Uterus (tissue), 4 donors: ENCODE measurements at regions of chr19 and their contacts with region 1.

Region 1: GRCh38 chr19:44954824-44955586 is at the start of gene CLPTM1:
- DNase-seq: peak; percentile 95 to 96
- H3K4me3 ChIP-seq: peak within 1 kb of the TSS; percentile 84 to 99
- H3K27ac ChIP-seq: peak within 1 kb of the TSS; percentile 90 to 95
- H3K4me1 ChIP-seq: peaks cover 14 to 15% of the 10 kb centered on the region in 2 donors
- H3K27me3 ChIP-seq: no peaks in the 10 kb centered on the region
- CTCF ChIP-seq: peak in 2 of 4 experiments; percentile 31 to 44
- POLR2A ChIP-seq: peak; percentile 53 to 78
- total RNA-seq, gene CLPTM1: 30.6 to 99.5 (median 64.2) TPM

Region 2: GRCh38 chr19:44905437-44906160 is 49.4 kb before region 1 on chr19 and contains the start of gene APOE:
- intact Hi-C with region 1: loop called (anchors 5 kb)
- DNase-seq: no peak
- H3K4me3 ChIP-seq: peak within 1 kb of the TSS in 1 of 2 donors; percentile 11
- H3K27ac ChIP-seq: peak within 1 kb of the TSS in 1 of 2 donors; percentile 7
- H3K4me1 ChIP-seq: no peaks in the 10 kb centered on the region
- H3K27me3 ChIP-seq: peaks cover 0 to 5% of the 10 kb centered on the region in 2 donors
- CTCF ChIP-seq: no peak
- POLR2A ChIP-seq: no peak
- total RNA-seq, gene APOE: 9.1 to 92.5 (median 33.6) TPM